ENCODE measurements at regions of chr5 and their contacts with region 1.

Region 1: DNA sequence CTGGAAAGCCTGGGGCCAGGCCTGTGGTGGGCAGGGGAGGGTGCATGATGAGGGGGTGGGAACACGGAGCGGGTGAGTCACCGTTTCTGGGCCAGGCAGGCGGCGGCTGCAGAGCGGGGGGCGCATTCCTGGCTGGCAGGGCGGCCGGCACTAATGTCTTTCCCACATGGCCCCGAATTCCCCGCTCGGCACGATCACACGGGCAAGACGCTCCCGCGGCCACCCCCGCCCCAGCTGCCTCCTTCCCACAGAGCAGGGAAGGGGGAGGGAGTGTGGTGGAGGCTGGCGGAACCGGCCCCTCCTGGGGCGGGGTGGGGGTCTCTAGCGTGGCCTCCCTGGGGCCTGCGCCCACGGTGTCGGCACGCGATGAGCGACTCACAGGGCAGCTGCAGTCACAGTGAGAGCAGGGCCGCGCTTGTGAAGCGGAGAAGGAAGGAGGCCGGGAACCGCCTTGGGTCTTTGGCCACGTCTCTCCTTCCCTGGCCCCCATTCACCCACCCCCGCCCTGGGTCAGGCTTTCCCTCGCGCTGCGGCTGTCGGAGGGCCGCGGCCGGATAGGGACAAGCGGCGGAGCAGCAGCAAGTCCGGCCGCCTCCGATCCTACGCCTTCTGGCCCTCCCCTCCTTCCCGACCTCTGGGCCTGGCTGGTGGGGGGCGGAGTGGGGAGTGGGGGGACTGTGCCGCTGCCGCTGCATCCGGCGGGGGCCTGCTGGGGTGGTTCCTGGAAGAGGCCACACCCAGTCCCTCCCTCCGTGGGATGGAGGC is 48.9 kb downstream of the CXXC5 start:
- DNase-seq: peak; percentile 74 to 92
- H3K4me3 ChIP-seq: peak overlapping the region; percentile 49 to 62
- H3K27ac ChIP-seq: peak overlapping the region; percentile 90 to 93
- H3K4me1 ChIP-seq: peaks cover 4 to 40% (median 36%) of the 10 kb centered on the region in 4 donors
- H3K27me3 ChIP-seq: no peaks in the 10 kb centered on the region
- CTCF ChIP-seq: no peak

Region 2: DNA sequence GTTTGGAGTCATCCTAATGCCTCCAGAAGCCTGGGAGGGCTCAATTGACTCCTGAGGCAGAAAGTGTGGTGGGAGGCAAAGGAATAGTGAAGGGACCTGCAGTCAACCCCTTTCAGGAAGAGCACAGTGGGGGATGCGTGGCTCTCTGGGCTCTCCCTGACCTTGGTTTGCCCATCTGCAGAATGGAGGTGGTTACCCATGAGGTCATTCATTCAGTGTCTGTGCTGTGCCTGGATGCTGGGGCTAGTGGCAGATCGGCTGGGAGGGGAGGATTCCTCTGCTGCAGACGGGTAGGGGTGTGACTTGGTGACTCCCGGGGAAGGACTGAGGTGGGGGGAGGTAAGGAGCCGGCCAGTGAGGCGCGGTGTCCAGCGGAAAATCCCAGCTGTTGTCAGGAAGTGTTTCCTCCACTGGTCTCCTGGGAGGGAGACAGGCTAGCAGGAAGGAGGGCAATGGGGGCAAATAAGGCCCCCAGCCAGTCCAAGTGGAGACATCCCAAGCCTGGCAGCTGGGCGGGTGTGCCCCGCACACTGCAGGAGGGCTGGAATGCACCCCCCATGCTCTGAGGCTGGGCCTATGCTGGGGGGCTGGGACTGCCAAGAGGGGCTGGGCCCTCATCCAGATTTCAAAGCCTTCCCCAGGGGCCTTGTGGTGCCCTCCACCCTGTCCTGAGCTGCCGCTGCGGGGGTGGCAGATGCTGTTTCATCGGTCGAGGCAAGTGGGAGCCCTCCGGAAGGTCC is 38.0 kb before region 1 on chr5:
- intact Hi-C with region 1: loop called (anchors 5 kb)
- DNase-seq: peak; percentile 71 to 87
- H3K4me3 ChIP-seq: peak overlapping the region; percentile 40 to 47
- H3K27ac ChIP-seq: peak overlapping the region; percentile 88 to 94
- H3K4me1 ChIP-seq: peaks cover 11 to 100% (median 93%) of the 10 kb centered on the region in 4 donors
- H3K27me3 ChIP-seq: no peaks in the 10 kb centered on the region
- CTCF ChIP-seq: no peak

Region 3: GRCh38 chr5:139765409-139766217 is 68.5 kb after region 1 on chr5:
- intact Hi-C with region 1: loop called (anchors 10 kb)
- DNase-seq: peak; percentile 61 to 87
- H3K4me3 ChIP-seq: peak overlapping the region; percentile 46 to 64
- H3K27ac ChIP-seq: peak overlapping the region in 1 of 2 donors; percentile 46
- H3K4me1 ChIP-seq: peaks cover 0 to 17% (median 13%) of the 10 kb centered on the region in 4 donors
- H3K27me3 ChIP-seq: peaks cover 0 to 19% of the 10 kb centered on the region in 2 donors
- CTCF ChIP-seq: peak; percentile 98 to 99

Measured in tibial artery (tissue), 4 donors.